CD4-positive, alpha-beta T cell (primary cell): ENCODE measurements at regions of chr11 and their contacts with region 1.

Region 1: GRCh38 chr11:78574386-78575381 is at the start of gene NARS2:
- DNase-seq: peak; percentile 94 to 99 (median 98)
- ATAC-seq: peak; percentile 96
- H3K4me3 ChIP-seq: peak within 1 kb of the TSS; percentile 82
- H3K4me3 Mint-ChIP-seq: peak within 1 kb of the TSS; percentile 93
- H3K27ac ChIP-seq: peak within 1 kb of the TSS; percentile 62 to 74
- H3K27ac Mint-ChIP-seq: peak within 1 kb of the TSS; percentile 96
- H3K4me1 ChIP-seq: peaks cover 14% of the 10 kb centered on the region
- H3K4me1 Mint-ChIP-seq: peaks cover 48% of the 10 kb centered on the region
- H3K27me3 ChIP-seq: no peaks in the 10 kb centered on the region
- H3K27me3 Mint-ChIP-seq: no peaks in the 10 kb centered on the region
- CTCF ChIP-seq: no peak
- total RNA-seq, gene NARS2: 8.7 to 9.3 TPM

Region 2: GRCh38 chr11:77066229-77067042 is 1508.2 kb before region 1 on chr11 and contains the start of gene CAPN5:
- CTCF ChIA-PET with region 1: no interaction called
- POLR2A ChIA-PET with region 1: no interaction called
- intact Hi-C with region 1: loop called in 1 of 2 experiments (anchors 10 kb)
- DNase-seq: peak; percentile 71 to 94 (median 82)
- ATAC-seq: peak; percentile 90
- H3K4me3 ChIP-seq: peak within 1 kb of the TSS; percentile 69
- H3K4me3 Mint-ChIP-seq: peak within 1 kb of the TSS; percentile 92
- H3K27ac ChIP-seq: peak within 1 kb of the TSS in 1 of 2 donors; percentile 39
- H3K27ac Mint-ChIP-seq: peak within 1 kb of the TSS; percentile 71
- H3K4me1 ChIP-seq: peaks cover 19% of the 10 kb centered on the region
- H3K4me1 Mint-ChIP-seq: peaks cover 16% of the 10 kb centered on the region
- H3K27me3 ChIP-seq: no peaks in the 10 kb centered on the region
- H3K27me3 Mint-ChIP-seq: no peaks in the 10 kb centered on the region
- CTCF ChIP-seq: no peak
- total RNA-seq, gene CAPN5: 5.1 to 6.9 TPM

Region 3: GRCh38 chr11:77637345-77638165 is 937.1 kb before region 1 on chr11 and contains the start of gene CLNS1A:
- CTCF ChIA-PET with region 1: no interaction called
- POLR2A ChIA-PET with region 1: no interaction called
- intact Hi-C with region 1: loop called in 1 of 2 experiments (anchors 10 kb)
- DNase-seq: peak; percentile 61 to 89 (median 74)
- ATAC-seq: peak; percentile 99
- H3K4me3 ChIP-seq: peak within 1 kb of the TSS; percentile 92
- H3K4me3 Mint-ChIP-seq: peak within 1 kb of the TSS; percentile 98
- H3K27ac ChIP-seq: peak within 1 kb of the TSS; percentile 65 to 77
- H3K27ac Mint-ChIP-seq: peak within 1 kb of the TSS; percentile 85
- H3K4me1 ChIP-seq: peaks cover 31% of the 10 kb centered on the region
- H3K4me1 Mint-ChIP-seq: peaks cover 48% of the 10 kb centered on the region
- H3K27me3 ChIP-seq: peaks cover 0 to 2% of the 10 kb centered on the region in 2 experiments
- H3K27me3 Mint-ChIP-seq: no peaks in the 10 kb centered on the region
- CTCF ChIP-seq: no peak
- total RNA-seq, gene CLNS1A: 87.8 to 93.1 TPM

Region 4: DNA sequence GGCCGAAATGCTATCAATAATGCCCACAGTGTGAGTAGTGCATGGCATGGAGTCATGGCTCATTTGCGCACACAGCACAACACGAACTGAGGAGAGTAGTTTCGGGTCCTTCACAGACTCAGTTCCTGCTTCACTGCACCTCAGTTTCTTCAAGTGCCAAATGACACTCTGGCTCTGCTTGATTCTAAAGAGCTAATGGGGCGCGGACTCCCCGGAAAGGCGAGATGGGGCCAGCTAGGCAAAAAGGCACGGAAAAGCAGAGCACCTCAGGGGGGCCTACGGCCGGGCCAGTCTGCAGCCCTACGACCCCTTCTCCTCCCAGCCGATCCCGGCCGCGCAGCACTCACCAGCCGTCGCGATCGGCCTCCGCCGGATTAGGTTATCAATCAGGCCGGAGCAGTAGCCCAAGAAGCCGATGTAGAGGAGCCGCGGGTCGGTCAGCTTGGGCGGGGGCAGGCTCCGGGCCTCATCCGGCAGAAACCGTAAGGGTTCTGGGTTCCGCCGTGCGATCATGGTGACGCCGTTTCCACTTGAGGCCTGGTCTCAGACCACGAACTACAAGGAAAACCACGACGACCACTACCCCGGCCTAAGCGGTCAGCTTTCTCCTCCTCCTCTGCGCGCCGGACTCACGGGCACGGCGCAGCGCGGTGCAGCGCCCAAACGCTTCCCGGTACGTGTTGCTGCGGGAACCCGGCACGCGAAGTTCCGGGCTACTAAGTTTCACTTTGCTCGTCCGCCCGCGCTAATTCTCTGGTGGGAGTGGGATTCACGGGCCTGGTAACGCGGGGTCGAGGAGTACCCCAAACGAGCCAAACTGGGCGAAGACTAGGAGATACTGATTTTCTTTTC is 495.2 kb before region 1 on chr11 and contains the start of gene NDUFC2:
- CTCF ChIA-PET with region 1: no interaction called
- POLR2A ChIA-PET with region 1: no interaction called
- intact Hi-C with region 1: loop called in 1 of 2 experiments (anchors 5 kb)
- DNase-seq: peak; percentile 45 to 82 (median 58)
- ATAC-seq: peak; percentile 79
- H3K4me3 ChIP-seq: peak within 1 kb of the TSS; percentile 88
- H3K4me3 Mint-ChIP-seq: peak within 1 kb of the TSS; percentile 96
- H3K27ac ChIP-seq: peak within 1 kb of the TSS; percentile 57 to 65
- H3K27ac Mint-ChIP-seq: peak within 1 kb of the TSS; percentile 93
- H3K4me1 ChIP-seq: peaks cover 41% of the 10 kb centered on the region
- H3K4me1 Mint-ChIP-seq: peaks cover 60% of the 10 kb centered on the region
- H3K27me3 ChIP-seq: no peaks in the 10 kb centered on the region
- H3K27me3 Mint-ChIP-seq: no peaks in the 10 kb centered on the region
- CTCF ChIP-seq: no peak
- total RNA-seq, gene NDUFC2: 62.6 to 68.5 TPM

Region 5: DNA sequence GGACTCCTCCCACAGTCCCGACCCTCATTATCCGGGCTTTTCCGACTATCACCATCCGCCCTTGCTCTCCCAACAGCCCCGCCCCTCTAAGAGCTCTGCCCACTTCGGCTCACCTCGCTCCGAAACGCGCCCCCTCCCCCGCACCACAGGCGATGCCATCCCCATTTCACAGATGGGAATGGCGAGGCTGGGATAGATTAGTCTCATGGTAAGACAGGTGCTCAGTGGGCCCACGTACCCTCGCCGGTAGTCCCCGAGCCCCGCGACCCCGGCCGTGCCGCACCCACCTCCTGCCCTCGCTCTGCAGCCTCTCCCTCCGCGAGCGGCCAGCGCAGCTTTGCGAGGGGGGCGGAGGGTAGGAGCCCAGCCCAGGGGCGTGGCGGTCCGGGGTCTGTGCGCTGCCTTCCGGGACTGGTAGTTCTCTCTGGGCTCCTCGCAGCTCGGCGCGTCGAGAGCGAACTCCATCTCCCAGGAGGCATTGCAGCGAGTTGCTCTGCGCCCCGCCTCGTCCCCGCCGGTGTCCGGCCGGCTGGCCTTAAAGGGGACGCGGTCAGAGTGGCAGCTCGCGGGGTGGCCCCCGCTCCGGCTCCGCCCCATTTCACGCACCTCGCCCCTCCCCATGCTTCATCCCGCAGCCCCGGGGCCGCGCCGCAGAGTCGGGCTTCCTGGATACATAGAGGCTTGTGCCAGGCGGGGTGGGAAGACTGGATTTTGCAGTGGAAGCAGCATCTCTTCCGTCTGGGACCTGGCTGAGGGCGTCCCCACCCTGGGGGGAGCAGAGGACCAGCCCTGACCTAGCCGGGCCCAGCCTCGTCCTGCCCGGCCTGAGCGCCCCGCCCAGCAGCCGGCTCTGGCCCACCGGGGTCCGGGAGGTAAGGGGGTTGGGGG is 386.2 kb before region 1 on chr11 and contains the starts of genes KCTD21 and USP35:
- CTCF ChIA-PET with region 1: no interaction called
- POLR2A ChIA-PET with region 1: interaction called, 9 read pairs
- intact Hi-C with region 1: loop called in 1 of 2 experiments (anchors 5 kb)
- DNase-seq: peak; percentile 80 to 96 (median 88)
- ATAC-seq: peak; percentile 82
- H3K4me3 ChIP-seq: peak within 1 kb of the TSS; percentile 97
- H3K4me3 Mint-ChIP-seq: peak within 1 kb of the TSS; percentile 99
- H3K27ac ChIP-seq: peak within 1 kb of the TSS; percentile 56 to 86
- H3K27ac Mint-ChIP-seq: peak within 1 kb of the TSS; percentile 99
- H3K4me1 ChIP-seq: peaks cover 53% of the 10 kb centered on the region
- H3K4me1 Mint-ChIP-seq: peaks cover 55% of the 10 kb centered on the region
- H3K27me3 ChIP-seq: no peaks in the 10 kb centered on the region
- H3K27me3 Mint-ChIP-seq: no peaks in the 10 kb centered on the region
- CTCF ChIP-seq: no peak
- total RNA-seq, gene KCTD21: 3.5 to 6.5 TPM
- total RNA-seq, gene USP35: 29.2 to 33.1 TPM